Stomach (tissue), 19 donors: ENCODE measurements at regions of chr9 and their contacts with region 1.

Region 1: GRCh38 chr9:114291064-114291474 is 31.8 kb upstream of the ORM1 start:
- DNase-seq: peak; percentile 81 to 87
- H3K4me3 ChIP-seq: no peak overlapping the region
- H3K27ac ChIP-seq: no peak overlapping the region
- H3K4me1 ChIP-seq: peaks cover 0 to 9% (median 0%) of the 10 kb centered on the region in 4 donors
- H3K27me3 ChIP-seq: no peaks in the 10 kb centered on the region
- CTCF ChIP-seq: peak in 6 of 7 experiments; percentile 62 to 98 (median 95)
- EP300 ChIP-seq: no peak
- POLR2A ChIP-seq: no peak

Region 2: DNA sequence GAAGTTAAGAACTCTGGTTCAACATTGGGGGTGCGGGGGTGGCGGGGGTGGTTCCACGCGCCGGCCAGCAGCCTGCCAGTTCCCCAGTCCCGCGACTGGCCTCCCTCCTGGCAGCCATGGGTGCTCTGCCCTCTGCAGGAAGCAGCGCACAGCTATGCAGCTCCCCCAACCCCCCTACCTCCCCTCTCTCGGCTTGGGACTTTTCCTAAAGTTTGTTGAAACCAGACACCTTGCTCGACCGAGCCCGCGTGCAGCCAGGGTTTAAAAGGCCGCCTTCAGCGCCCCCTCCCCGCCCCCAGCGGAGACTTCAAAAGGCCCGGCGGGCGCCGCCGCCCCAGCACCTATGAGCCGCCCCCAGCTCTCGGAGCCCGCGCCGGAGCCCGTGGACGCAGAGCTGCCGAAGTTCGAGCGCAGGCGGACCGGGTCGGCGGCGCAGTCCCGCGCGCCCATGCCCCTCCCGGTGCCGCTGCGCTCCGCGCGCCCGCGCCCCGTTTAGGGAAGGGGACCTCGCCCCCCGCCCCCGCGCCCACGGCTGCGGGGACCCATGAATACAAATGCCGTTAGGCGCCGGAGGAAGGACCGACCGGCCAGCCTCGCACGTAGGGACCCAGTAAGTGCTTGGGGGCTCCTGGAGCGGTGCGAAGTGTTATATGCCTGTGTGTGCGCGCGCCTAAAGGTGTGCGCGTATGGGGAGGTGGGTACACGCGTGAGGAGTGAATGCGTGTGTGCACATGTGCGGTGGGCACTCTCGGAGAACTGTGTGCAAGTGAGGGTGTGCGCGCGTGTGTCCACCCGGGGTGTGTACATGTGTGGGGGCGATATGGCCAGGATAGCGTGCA is 137.1 kb before region 1 on chr9:
- intact Hi-C with region 1: loop called (anchors 5 kb)
- DNase-seq: peak; percentile 33 to 87
- H3K4me3 ChIP-seq: peak overlapping the region; percentile 35 to 73 (median 58)
- H3K27ac ChIP-seq: no peak overlapping the region
- H3K4me1 ChIP-seq: peaks cover 27 to 40% (median 35%) of the 10 kb centered on the region in 4 donors
- H3K27me3 ChIP-seq: peaks cover 7 to 76% (median 26%) of the 10 kb centered on the region in 3 donors
- CTCF ChIP-seq: peak in 1 of 7 experiments; percentile 13
- EP300 ChIP-seq: no peak
- POLR2A ChIP-seq: no peak

Region 3: GRCh38 chr9:114224247-114224610 is 66.8 kb before region 1 on chr9:
- intact Hi-C with region 1: no loop called
- DNase-seq: no peak
- H3K4me3 ChIP-seq: no peak overlapping the region
- H3K27ac ChIP-seq: peak overlapping the region in 1 of 5 donors; percentile 37
- H3K4me1 ChIP-seq: peaks cover 0 to 13% (median 5%) of the 10 kb centered on the region in 4 donors
- H3K27me3 ChIP-seq: no peaks in the 10 kb centered on the region
- CTCF ChIP-seq: no peak
- EP300 ChIP-seq: no peak
- POLR2A ChIP-seq: no peak